ENCODE measurements at regions of chr22 and their contacts with region 1.

Region 1: DNA sequence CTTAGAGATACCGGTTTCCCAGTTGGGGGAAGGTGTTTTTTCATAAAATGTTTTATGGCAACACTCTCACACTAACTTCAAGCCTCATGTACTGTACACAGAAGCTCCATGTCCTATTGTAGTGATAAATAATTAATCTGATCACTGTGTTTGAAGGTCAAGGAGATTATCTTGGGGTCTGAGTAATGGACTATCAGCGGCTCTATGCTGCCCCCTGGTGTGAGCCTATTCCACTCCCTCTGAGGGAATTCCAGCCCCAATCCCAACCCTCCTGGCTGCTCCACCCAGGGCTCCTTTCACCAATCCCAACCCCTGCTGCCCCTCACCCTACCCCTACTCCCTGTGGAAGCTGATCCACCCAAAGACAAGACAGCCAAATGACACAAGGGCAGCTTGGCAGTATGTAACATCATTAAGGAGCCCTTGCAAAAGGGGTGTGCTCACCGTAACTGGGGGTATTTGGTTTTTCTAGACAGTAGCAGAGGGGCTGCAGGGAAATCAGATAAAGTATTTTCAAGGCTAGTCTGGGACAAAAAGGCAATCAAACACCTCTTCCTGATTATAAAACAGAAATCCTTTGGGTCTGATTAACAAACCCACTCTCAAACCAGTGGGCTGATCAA is 22.3 kb downstream of the HPS4 start:
- H3K4me3 ChIP-seq: no peak overlapping the region
- H3K27ac ChIP-seq: no peak overlapping the region
- H3K4me1 ChIP-seq: no peaks in the 10 kb centered on the region; the same call in 1 of the 2 replicates
- CTCF ChIP-seq: peak; percentile 56

Region 2: GRCh38 chr22:26226538-26227297 is 234.6 kb before region 1 on chr22:
- CTCF ChIA-PET with region 1: no interaction called
- POLR2A ChIA-PET with region 1: no interaction called
- H3K4me3 ChIP-seq: no peak overlapping the region
- H3K27ac ChIP-seq: no peak overlapping the region
- H3K4me1 ChIP-seq: no peaks in the 10 kb centered on the region
- CTCF ChIP-seq: no peak

Region 3: DNA sequence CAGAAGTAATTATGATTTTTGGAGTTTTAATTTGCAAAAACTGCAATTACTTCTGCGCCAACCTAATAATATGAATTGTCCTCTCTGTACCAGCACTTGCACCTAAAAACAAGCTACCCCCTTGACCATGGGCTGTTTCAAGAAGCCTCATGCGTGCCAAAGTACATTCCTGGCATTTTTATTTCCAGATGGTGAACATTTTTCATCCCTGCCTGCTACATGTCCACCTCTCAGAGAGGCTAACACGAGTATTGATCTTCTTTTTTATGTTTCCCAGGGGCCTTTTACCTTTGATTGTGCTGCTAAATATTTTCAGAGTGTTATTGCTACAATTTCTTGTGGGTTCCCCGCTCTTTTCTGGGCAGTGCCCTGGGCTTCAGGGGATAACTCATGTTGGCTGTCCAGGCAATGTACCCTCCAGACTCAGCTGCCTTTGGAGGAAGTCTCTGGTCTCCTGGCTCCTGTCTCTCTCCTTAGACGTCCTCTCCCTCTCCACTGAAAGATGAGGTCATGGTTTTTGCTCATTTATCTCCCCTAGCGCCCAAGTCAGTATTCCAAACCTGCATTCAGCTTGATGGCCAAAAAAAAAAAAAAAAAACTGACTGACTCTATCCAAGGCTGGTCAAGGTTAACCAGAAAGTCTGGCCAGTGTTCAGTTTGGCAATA is 118.4 kb before region 1 on chr22:
- CTCF ChIA-PET with region 1: no interaction called
- POLR2A ChIA-PET with region 1: no interaction called
- H3K4me3 ChIP-seq: no peak overlapping the region
- H3K27ac ChIP-seq: no peak overlapping the region
- H3K4me1 ChIP-seq: no peaks in the 10 kb centered on the region
- CTCF ChIP-seq: no peak

Region 4: DNA sequence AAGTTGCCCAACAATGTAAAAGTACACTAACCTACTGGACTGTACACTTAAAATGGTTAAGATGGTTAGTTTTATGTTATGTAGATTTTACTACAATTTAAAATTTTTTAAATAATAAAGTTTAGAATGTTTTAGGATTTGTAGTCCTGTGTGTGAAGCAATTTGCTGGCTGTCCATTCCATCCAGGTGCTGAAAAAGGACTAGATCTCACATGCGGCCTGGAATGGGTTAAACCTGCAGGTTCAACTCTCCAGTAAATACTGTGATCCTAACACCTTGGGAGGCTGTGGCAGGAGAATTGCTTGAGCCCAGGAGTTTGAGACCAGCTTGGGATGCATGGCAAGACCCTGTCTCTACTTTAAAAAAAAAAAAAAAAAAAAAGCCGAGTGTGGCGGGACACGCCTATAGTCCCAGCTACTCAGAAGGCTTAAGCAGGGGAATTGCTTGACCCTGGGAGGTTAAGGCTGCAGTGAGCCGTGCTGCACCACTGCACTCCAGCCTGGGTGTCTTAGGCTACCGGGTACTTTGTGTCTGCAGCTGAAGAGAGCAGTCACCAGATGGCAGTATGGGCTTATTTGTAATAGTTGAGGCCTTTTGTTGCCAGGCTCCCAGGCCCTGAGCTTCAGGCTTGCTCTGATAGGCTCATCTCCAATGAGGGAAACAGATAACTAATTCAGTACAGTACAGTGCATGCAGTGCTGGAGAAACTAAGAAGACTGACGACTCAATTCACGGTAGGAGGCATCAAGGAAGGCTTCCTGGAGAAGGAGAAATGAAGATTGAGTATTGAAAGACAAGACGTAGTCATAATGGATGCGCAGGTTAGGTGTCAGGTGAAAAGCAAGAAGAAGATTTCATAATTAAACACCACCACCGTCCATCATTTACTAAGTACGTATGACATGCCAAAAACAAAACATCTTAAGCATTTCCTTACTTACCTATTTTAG is 97.0 kb before region 1 on chr22:
- CTCF ChIA-PET with region 1: interaction called, 195 read pairs
- POLR2A ChIA-PET with region 1: no interaction called
- H3K4me3 ChIP-seq: no peak overlapping the region
- H3K27ac ChIP-seq: no peak overlapping the region
- H3K4me1 ChIP-seq: no peaks in the 10 kb centered on the region
- CTCF ChIP-seq: peak; percentile 62; the same call in 1 of the 2 replicates

Region 5: GRCh38 chr22:26389125-26389524 is 72.2 kb before region 1 on chr22:
- CTCF ChIA-PET with region 1: interaction called, 267 read pairs
- POLR2A ChIA-PET with region 1: no interaction called
- H3K4me3 ChIP-seq: no peak overlapping the region
- H3K27ac ChIP-seq: no peak overlapping the region
- H3K4me1 ChIP-seq: no peaks in the 10 kb centered on the region
- CTCF ChIP-seq: no peak

Region 6: GRCh38 chr22:26404851-26405421 is 56.4 kb before region 1 on chr22:
- CTCF ChIA-PET with region 1: interaction called, 267 read pairs
- POLR2A ChIA-PET with region 1: no interaction called
- H3K4me3 ChIP-seq: no peak overlapping the region
- H3K27ac ChIP-seq: no peak overlapping the region
- H3K4me1 ChIP-seq: no peaks in the 10 kb centered on the region
- CTCF ChIP-seq: no peak

Region 7: DNA sequence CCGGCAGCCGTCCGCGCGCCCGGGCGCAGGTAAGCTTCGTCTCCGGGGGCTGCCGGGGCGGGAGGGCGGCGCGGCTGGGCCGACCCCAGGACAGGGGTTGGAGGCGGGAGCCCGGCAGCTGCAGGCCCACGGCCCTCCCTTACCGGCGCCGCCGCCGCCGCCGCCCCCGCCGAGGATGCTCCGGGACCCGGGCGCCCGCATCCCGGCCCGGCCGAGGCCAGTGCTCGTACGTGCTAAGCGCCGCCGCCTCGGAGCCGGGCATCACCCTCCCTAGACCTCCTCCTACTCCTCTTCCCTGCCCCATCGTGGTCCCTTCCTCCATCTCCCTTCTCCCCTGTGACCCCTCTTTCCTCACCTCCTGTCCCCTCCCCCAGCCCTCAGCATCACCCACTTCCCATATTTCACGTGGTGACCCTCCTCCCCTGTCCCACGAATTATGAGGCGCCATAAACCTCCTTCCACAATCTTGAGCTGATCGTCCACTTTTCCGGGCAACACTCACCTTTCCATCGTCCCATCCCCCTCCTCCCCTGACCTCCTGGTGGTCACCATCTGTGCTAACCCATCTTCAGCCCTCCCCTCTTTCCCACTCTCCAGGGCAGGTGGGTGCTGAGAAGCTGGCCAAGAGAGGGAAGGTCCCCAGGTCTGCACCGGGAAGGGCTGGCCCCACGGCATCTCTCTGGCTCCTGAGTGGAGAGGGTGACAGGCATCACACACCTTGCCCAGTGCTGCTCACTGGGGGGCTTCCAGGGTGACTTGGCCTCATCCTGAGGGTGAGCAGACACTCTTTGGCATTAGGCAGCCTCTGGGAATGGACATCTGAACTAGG is 31.6 kb before region 1 on chr22:
- CTCF ChIA-PET with region 1: interaction called, 20 read pairs
- POLR2A ChIA-PET with region 1: no interaction called
- H3K4me3 ChIP-seq: peak overlapping the region; percentile 49
- H3K27ac ChIP-seq: no peak overlapping the region; the same call in 1 of the 2 replicates
- H3K4me1 ChIP-seq: no peaks in the 10 kb centered on the region; the same call in 1 of the 2 replicates
- CTCF ChIP-seq: peak; percentile 11; the same call in 1 of the 2 replicates

Region 8: GRCh38 chr22:26471522-26471921 is 10.2 kb after region 1 on chr22:
- CTCF ChIA-PET with region 1: interaction called, 47 read pairs
- POLR2A ChIA-PET with region 1: no interaction called
- H3K4me3 ChIP-seq: no peak overlapping the region
- H3K27ac ChIP-seq: no peak overlapping the region
- H3K4me1 ChIP-seq: no peaks in the 10 kb centered on the region
- CTCF ChIP-seq: no peak

Region 9: DNA sequence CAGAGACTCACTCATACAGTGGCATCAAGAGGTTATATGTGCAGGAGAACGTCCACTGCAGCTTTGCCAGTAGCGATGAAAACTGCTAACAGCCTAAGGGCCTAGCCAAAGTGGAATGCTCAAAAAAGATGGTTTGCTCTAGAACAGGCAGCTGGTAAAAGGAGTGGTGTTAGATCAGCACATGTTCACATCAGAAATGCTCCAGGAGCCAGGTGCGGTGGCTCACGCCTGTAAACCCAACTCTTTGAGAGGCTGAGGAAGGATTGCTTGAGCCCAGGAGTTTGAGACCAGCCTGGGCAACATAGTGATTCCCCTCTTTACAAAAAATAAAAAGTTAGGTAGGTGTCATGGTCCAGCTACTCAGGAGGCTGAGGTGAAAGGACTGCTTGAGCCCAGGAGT is 61.3 kb after region 1 on chr22:
- CTCF ChIA-PET with region 1: no interaction called
- POLR2A ChIA-PET with region 1: no interaction called
- H3K4me3 ChIP-seq: no peak overlapping the region
- H3K27ac ChIP-seq: no peak overlapping the region
- H3K4me1 ChIP-seq: no peaks in the 10 kb centered on the region
- CTCF ChIP-seq: no peak

Region 10: DNA sequence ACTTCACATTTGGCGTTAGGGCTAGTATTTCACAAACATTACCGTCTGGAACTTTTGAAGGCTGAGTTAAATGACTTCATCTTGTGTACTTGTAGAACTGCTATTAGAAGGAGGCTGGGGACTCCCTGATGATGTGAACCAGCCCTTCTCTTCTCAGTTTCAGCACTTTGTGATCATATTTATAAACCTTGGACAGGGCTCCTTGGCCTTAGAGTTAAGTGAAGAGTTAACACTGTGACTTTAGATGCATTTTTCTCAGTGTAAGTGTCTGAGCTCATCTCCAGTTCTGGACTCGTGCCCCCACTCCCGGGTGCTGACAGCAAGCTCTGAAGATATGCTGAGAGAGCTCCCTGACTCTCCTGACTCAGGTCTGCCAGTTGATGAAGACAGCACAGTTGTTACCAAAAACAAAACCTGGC is 204.5 kb after region 1 on chr22:
- CTCF ChIA-PET with region 1: interaction called, 17 read pairs
- POLR2A ChIA-PET with region 1: no interaction called
- H3K4me3 ChIP-seq: no peak overlapping the region
- H3K27ac ChIP-seq: no peak overlapping the region
- H3K4me1 ChIP-seq: no peaks in the 10 kb centered on the region
- CTCF ChIP-seq: no peak

Region 11: DNA sequence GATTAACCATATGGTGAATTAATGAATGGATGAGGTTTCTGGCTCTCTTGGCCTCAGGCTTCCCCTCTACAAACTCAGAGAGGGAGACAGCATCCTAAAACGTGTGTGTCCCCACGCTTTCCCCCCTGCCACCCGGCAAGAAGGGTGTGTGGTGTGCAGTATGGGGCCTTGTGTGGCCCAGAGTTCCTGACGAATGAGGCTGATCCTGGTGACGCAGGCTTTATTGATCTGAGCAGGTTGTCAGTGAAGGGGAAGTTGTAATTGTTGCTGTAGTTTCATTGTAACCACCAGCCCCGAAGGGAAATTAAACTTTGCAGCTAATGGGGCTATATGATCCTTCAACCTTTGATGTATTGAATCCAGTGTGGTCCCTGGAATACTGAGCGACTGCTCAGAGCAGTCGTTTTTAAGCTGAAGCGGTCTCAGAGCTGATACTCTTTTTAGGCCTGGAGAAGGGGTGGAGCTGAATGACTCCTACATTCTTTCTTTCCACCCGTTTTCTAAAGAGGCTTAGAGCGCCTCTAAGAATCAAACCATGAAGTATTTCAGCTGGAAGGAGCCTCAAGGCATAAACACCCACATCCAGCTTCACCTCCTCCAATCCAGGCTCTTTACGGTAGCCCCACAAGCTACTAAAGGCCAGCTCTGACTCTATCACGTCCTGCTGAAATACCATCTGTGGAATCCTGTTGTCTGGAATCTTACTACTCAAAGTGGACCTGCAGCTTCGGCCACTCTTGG is 480.8 kb after region 1 on chr22:
- CTCF ChIA-PET with region 1: no interaction called
- POLR2A ChIA-PET with region 1: no interaction called
- H3K4me3 ChIP-seq: no peak overlapping the region
- H3K27ac ChIP-seq: no peak overlapping the region
- H3K4me1 ChIP-seq: no peaks in the 10 kb centered on the region
- CTCF ChIP-seq: no peak

Measured in HEK293 (cell line).